HCT116 (cell line): ENCODE measurements at regions of chr12 and their contacts with region 1.

Region 1: DNA sequence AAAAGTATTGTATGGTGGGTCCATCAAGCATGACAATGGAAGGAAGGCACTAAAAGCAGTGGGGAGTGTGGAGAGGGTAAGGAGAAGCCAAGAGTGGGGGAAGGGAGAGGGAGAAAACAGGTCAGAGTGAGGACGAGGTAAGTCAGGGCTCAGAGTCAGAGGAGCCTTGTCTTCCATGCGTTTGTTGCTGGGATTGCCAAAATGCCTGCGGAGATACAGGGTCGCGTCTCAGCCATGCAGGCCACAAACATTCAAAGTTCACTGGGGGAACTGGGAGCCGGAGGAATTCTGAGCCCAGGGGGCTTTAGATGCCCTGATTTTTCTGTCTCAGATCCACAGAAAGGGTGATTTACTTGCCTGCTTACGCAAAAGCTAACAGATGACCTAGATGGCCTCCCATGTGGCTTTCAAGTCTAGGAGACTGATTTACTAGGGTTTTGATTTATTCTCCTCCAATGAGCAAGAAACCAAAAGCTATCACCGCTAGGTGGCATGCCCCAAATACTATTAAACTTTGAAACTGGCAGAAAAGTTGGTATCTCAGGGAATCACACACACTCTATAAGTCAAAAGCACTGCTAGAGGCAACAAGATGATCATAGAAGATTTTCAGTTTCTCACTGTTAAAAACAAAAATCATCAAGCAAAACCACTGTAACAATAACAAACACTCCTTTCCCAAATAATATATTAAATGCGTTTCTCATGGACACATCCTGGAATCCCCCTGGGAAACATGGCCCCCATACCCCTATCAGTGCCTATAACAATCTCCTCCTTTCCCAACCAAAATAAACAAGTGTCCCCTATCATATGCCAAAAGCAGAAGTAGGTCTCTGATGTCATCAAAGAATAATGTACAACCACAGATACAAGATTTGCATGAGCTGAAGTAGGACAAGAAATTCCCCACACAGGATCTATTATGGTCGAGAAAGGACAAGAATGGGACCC is 26.6 kb upstream of the MDM1 start:
- DNase-seq: peak; percentile 50
- ATAC-seq: peak; percentile 81
- H3K4me3 ChIP-seq: no peak overlapping the region
- H3K27ac ChIP-seq: no peak overlapping the region
- H3K4me1 ChIP-seq: no peaks in the 10 kb centered on the region
- H3K27me3 ChIP-seq: no peaks in the 10 kb centered on the region
- CTCF ChIP-seq: peak; percentile 43 to 70 (median 67); a peak in 5 of 6 replicates
- POLR2A ChIP-seq: no peak
- RAD21 ChIP-seq: peak; percentile 81

Region 2: DNA sequence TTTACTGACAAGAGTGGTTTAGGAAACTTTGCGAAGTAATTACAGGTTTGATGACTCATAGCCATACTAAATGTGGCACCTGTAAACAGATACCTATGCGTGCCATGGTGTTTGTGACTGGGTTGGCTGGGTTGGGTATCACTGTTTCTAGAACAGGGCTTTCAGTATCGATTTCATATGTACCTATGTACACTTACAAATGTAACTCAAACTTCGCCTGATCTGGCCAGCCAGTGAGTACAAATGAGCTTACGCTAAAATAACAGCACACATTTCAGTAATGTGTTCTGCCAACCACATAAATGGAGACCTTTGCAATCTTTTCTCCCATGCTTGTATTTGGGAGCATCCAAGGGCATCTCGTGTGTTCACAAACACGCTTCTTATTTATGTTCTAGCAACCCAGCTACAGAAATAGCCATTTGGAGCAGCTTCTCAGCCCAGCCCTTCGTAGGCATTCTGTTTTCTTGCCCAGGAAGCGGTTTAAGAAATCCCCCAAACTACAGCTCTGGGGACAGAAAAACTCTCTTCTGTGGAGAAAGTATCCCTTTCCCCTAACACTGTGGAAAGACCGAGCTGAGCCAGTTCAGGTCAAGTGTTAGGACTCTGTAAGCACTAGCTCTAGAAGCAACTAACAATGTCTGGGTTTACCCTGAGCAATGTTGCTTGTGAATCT is 15.6 kb after region 1 on chr12:
- CTCF ChIA-PET with region 1: no interaction called
- POLR2A ChIA-PET with region 1: no interaction called
- RAD21 ChIA-PET with region 1: no interaction called
- intact Hi-C with region 1: no loop called
- DNase-seq: no peak
- ATAC-seq: no peak
- H3K4me3 ChIP-seq: no peak overlapping the region
- H3K27ac ChIP-seq: no peak overlapping the region
- H3K4me1 ChIP-seq: peaks cover 0 to 6% of the 10 kb centered on the region in 2 experiments; a peak in 1 of 4 replicates
- H3K27me3 ChIP-seq: peaks cover 5% of the 10 kb centered on the region; the same call in 1 of the 2 replicates
- CTCF ChIP-seq: no peak
- POLR2A ChIP-seq: no peak
- RAD21 ChIP-seq: no peak

Region 3: GRCh38 chr12:68665016-68665569 is 306.3 kb after region 1 on chr12:
- CTCF ChIA-PET with region 1: no interaction called
- POLR2A ChIA-PET with region 1: no interaction called
- RAD21 ChIA-PET with region 1: no interaction called
- intact Hi-C with region 1: loop called (anchors 10 kb)
- DNase-seq: no peak
- ATAC-seq: peak; percentile 22; the same call in 1 of the 2 replicates
- H3K4me3 ChIP-seq: no peak overlapping the region
- H3K27ac ChIP-seq: no peak overlapping the region
- H3K4me1 ChIP-seq: no peaks in the 10 kb centered on the region
- H3K27me3 ChIP-seq: no peaks in the 10 kb centered on the region
- CTCF ChIP-seq: no peak
- POLR2A ChIP-seq: no peak
- RAD21 ChIP-seq: peak; percentile 44; the same call in 1 of the 2 replicates

Region 4: GRCh38 chr12:68745904-68746571 is 387.2 kb after region 1 on chr12 and contains the start of gene SLC35E3:
- CTCF ChIA-PET with region 1: no interaction called
- POLR2A ChIA-PET with region 1: no interaction called
- RAD21 ChIA-PET with region 1: no interaction called
- intact Hi-C with region 1: loop called (anchors 10 kb)
- DNase-seq: peak; percentile 68
- ATAC-seq: peak; percentile 97
- H3K4me3 ChIP-seq: peak within 1 kb of the TSS; percentile 68 to 87
- H3K27ac ChIP-seq: peak within 1 kb of the TSS; percentile 65
- H3K4me1 ChIP-seq: peaks cover 0 to 11% of the 10 kb centered on the region in 2 experiments; a peak in 1 of 4 replicates
- H3K27me3 ChIP-seq: no peaks in the 10 kb centered on the region
- CTCF ChIP-seq: no peak
- POLR2A ChIP-seq: peak; percentile 65
- RAD21 ChIP-seq: no peak
- total RNA-seq, gene SLC35E3: 4.9 TPM